ENCODE measurements at regions of chr7 and their contacts with region 1.

Region 1: DNA sequence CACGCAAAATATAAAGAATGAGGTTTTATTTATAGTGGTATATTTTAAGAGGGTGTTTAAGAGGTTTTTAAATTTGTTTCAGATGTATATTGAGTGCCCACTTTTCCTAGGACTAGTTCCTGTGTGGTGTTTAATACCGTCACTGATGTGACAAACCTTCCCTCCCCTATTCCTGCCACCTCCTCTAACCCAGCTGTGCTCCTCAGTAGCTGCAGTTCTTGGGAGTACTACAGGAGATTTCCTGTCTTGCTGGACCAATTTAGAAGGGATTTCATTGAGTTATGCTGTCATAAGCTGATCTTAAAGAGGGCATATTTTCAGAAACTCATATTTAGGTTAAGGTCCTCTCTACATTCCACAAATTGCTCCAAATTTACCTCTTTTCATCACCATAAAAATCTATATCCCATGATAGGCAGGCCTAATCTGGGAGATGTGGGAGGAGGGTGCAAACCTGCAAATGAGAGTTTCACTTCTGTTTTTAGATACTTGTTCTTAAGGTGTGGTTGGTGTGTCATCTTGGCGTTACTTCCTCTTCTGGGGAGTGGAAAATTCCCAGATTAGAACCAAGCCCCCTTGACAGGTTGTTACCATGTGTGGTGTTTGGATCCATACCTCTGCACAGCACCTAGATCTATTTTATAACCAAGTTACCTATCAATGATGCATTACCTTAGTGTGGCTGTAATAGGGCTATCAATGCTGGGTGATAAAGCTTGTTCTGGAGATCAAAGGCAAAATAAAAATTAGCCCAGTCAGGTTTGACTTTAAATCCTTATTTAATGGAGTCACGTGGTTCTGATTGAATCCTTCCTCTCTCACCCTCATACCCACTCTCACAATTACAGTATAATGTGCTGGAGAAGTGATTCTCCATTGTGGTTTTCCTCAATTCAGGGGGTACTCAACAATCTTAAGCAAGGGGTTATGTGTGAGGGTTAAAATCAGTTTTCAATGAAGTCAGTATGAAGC is 141.1 kb downstream of the CDK14 start:
- DNase-seq: peak; percentile 88
- H3K4me3 ChIP-seq: peak overlapping the region; percentile 47
- H3K27ac ChIP-seq: peak overlapping the region; percentile 82
- H3K4me1 ChIP-seq: peaks cover 65% of the 10 kb centered on the region
- CTCF ChIP-seq: no peak

Region 2: DNA sequence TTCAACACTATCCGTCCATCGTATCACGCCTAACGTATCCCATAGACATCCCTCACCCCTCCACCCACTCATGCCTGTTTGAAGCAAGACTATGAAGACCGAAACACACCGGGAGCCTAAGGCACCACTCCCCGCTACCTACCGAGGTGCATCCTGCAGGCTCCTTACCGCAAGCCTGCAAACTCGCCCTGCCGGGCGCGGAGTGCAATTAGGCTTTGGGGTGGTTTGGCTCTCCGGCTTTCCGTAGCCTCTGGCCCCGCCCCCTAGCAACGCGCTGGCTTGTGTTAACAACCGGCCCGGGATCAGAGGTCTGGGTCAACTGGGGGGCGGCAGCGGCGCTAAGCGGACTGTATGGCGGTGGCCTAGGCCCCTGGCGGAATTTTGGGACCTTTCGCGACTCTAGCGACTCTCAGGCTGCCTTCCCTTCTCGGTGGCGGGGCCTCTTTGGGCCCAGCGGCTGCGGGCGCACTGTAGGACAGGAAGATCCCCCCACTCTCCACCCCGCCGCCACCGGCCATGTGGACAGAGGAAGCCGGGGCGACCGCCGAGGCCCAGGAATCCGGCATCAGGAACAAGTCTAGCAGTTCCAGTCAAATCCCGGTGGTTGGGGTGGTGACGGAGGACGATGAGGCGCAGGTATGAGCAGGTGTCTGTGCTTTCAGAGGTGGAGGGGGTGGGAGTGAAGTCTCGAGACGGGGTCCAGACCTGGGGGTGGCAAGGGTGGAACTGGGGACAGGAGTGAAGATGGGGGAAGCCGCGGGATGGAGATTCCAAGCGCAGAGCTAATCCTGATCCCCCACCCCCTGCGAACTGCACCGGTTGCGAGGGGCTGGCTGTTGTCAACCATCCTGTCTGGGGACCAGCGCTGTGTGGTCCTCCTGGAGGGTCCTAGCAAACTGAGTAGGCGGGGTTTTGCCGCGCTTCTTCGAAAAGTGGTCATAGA is 492.1 kb before region 1 on chr7 and contains the start of gene CFAP69:
- CTCF ChIA-PET with region 1: no interaction called
- POLR2A ChIA-PET with region 1: interaction called, 10 read pairs
- intact Hi-C with region 1: no loop called
- DNase-seq: no peak
- H3K4me3 ChIP-seq: no peak within 1 kb of the TSS
- H3K27ac ChIP-seq: no peak within 1 kb of the TSS
- H3K4me1 ChIP-seq: no peaks in the 10 kb centered on the region
- CTCF ChIP-seq: no peak
- total RNA-seq, gene CFAP69: not detected in 2 replicates

Region 3: DNA sequence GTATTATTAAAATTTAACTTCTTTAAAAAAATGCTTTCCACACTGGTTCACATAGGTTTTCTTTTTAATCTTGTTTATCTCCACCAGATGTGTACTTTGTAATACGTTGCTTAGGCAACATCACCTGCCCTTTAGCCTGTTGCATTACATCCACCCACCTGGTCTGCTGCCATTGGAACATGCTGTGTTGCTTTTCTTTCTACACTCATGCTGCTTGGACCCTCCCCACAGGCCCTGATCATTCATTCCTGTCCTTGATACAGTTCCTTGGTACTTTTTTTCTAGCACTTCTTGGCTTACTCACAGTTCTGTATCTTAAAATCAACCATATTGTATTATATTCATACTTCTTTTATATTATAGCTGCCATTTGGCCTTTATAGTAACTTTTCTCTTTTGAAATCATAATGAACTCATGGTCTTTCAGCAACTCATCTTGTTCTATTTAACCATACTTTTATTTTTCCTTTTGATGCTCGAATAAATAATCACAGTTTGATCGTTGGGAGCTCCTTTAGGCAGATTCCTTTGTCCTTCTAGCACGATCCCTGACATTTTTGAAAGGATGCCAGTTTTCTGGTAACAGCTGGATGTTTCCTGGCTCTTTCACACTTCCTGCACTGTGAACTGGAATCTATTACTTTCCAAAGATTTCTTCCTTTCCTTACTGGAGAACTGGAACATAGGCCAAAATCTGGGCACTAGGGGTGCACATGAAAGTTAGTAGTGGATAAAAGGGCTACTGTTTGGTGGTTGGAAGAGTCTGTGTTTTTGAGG is 16.1 kb before region 1 on chr7:
- CTCF ChIA-PET with region 1: no interaction called
- POLR2A ChIA-PET with region 1: interaction called, 13 read pairs
- intact Hi-C with region 1: no loop called
- DNase-seq: peak; percentile 67
- H3K4me3 ChIP-seq: peak overlapping the region; percentile 10
- H3K27ac ChIP-seq: peak overlapping the region; percentile 53
- H3K4me1 ChIP-seq: peaks cover 100% of the 10 kb centered on the region
- CTCF ChIP-seq: no peak